ENCODE measurements at regions of chr20 and their contacts with region 1.

Region 1: DNA sequence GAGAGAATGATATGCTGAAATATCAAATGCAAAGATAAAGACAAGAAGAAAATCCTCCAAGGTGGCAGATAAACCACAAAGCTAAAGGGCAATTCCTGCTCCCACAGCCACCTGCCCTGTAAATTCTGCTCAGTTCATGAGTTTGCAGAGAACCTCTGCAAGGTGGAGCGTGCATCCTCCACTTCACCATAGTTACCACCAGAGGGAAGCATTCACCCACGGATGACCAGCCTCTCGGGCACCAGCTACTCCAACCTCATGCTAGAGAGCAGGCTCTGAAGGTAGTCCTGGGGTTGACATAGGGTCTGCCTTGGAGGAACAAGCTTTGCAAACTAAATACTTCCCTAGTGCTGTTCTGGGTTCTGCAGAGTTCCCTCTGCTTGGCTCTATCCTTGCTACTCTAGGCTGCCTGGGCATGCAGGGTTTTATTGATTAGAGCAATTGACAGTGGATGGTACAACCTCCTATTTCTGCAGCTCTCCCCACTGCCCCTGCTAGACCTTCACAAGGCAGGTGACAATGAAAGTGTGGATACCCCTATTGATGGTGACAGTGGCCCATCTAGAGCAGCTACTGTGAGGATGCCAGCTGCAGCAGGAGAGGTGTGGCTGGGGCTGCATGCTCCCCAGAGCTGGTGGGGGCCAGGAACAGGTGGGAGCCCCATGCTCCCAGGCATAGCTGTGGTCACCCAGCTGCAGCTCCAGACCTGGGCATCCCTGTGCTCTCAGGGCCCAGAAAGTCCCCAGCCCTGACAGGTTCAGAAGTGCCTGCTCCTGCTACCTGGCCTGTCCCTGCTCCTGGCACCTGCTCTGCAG is 51.1 kb downstream of the GGTLC1 start:
- ATAC-seq: peak; percentile 95 to 100 (median 100)
- H3K4me3 ChIP-seq: no peak overlapping the region
- H3K27ac ChIP-seq: no peak overlapping the region
- H3K4me1 ChIP-seq: no peaks in the 10 kb centered on the region

Region 2: DNA sequence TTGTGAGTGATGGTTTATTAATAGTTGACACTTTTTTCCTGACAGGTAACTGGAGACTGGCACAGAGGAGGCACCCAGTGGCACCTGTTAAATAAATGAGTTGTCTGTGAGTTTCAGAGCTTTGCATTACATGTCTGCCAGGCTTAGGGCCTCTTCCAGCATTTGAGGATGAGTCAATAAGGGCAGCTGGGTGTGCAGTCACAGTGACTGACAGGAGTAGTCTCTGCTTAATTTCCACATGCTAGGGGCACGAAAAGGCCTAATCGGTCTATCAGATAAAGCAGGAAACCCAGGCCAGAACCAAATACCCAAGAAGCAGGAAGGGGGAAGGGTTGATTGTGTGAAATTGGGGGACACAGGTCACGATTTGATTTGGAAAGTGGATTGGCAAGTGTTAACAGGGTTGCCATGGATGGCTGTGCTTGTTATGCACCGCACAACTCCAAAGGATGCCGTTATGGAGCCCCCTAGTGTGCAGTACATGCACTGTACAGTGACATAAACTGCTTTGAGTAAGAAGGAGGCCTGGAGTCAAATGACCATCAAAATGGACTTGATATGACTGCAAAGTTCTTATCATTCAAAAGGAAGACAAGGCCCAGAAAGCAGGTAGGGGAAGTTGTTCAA is 163.0 kb after region 1 on chr20:
- in situ Hi-C with region 1: loop called in 1 of 9 experiments (anchors 10 kb)
- ATAC-seq: peak; percentile 82 to 97 (median 89)
- H3K4me3 ChIP-seq: no peak overlapping the region
- H3K27ac ChIP-seq: no peak overlapping the region
- H3K4me1 ChIP-seq: peaks cover 10 to 13% of the 10 kb centered on the region in 2 donors

Measured in motor neuron (in vitro differentiated cells).